SK-N-SH (cell line): ENCODE measurements at regions of chr11 and their contacts with region 1.

Region 1: DNA sequence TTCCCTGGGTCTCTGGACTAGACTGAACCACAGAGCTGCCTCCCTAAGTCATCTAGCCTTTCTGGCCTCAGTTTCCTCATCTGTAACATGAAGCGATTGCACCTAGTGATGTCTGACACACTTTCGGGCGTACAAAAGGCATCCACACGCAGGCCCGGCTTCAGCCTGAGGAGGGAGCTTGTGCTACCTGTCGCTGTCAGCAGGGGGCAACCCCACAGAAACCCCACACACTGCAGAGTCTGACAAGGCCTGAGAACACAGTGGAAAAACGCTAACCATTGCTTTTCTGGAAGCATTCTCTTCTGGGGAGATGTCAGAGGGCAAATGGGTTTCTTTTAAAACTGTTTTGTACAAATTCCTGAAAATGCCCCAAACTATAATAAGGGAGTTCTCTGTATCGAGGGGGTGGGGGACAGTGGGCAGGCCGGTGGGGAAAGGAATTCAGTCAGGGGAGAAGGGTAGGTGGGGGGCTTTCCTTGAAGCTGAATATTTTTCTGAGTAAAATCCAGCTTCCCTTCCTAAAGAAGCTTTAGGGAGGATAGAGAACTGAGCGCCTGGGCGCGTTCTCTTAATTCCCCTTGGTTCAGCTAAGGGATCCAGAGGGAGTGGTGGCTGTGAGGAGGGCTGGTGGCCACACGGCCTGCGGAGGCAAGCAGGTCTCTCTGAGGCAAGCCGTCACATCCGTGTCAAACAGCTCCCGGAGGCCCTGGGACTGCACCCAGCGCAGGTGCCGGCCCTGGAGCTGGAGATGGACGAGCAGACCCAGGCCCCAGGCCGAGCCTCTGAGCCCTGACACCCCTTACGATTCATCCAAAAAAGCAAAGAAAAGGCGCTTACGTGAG is 533 bp downstream of the ELF5 start:
- DNase-seq: peak; percentile 78
- H3K4me3 ChIP-seq: peak overlapping the region in 1 of 2 experiments; percentile 31; a peak in 1 of 4 replicates
- H3K27ac ChIP-seq: no peak overlapping the region
- H3K4me1 ChIP-seq: peaks cover 0 to 3% of the 10 kb centered on the region in 2 experiments; a peak in 2 of 4 replicates
- H3K27me3 ChIP-seq: no peaks in the 10 kb centered on the region; the same call in 1 of the 2 replicates
- CTCF ChIP-seq: peak; percentile 75
- EP300 ChIP-seq: no peak
- RAD21 ChIP-seq: peak; percentile 59

Region 2: DNA sequence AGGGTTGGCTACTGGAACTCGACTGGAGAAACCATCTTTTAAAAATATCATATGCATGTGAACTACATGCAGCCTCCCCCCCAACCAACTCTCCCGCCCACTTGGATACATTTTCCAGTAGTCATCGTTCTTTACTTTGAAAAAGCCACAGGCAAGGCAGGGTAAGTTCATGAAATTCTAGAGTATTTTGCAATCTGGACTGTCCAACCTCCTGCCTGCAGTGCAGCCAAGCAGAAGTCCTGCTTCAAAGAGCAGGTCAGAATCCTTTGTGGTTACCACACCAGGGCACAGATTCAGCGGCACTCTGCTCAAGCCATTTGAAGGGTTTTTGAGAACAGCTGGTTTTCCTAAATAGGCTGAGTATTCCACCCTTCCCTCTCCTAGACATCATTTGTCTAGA is 11.6 kb before region 1 on chr11:
- CTCF ChIA-PET with region 1: interaction called, 28 read pairs
- POLR2A ChIA-PET with region 1: no interaction called
- DNase-seq: no peak
- H3K4me3 ChIP-seq: no peak overlapping the region
- H3K27ac ChIP-seq: no peak overlapping the region
- H3K4me1 ChIP-seq: peaks cover 0 to 2% of the 10 kb centered on the region in 2 experiments; a peak in 1 of 4 replicates
- H3K27me3 ChIP-seq: no peaks in the 10 kb centered on the region
- CTCF ChIP-seq: no peak
- EP300 ChIP-seq: no peak
- RAD21 ChIP-seq: no peak

Region 3: DNA sequence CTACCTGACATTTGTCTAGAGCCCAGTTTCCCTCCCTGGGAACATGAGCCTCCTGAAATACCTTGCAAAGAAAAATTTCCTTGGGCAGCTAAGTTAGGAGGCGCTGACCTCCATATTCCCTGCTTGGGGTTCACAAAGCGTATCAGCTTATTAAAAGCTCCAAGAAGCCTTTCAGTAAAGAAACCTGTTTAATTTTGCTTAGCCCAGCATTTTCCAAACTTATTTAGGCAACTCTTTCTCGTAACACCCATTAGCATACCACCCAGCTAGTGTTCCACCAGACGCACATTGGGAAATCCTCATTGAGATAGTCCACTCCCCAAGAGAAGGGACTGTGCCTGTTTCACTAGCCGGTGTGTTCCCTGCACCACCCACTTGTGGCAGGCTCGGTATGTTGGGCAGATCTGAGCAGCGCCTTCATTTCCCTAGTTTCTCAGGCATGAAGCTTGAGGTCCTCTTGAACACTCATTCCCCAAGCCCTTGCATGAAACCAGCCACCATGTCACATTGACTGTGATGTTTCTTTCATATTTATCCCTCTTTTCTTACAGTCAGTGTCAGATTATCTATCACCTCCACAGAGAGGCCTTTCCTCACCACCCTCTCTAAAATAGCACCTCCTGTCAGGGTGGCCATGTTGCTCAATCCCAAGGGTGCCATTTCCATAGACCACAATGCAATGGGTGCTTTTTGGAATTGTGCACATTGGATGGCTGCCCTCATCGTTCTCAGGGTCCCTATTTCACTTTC is 13.0 kb after region 1 on chr11:
- CTCF ChIA-PET with region 1: interaction called, 13 read pairs
- POLR2A ChIA-PET with region 1: no interaction called
- DNase-seq: no peak
- H3K4me3 ChIP-seq: no peak overlapping the region
- H3K27ac ChIP-seq: no peak overlapping the region
- H3K4me1 ChIP-seq: peaks cover 0 to 9% of the 10 kb centered on the region in 2 experiments; a peak in 1 of 4 replicates
- H3K27me3 ChIP-seq: peaks cover 11% of the 10 kb centered on the region; the same call in 1 of the 2 replicates
- CTCF ChIP-seq: no peak
- EP300 ChIP-seq: no peak
- RAD21 ChIP-seq: no peak

Region 4: GRCh38 chr11:34558211-34558610 is 45.1 kb after region 1 on chr11:
- CTCF ChIA-PET with region 1: no interaction called
- POLR2A ChIA-PET with region 1: no interaction called
- DNase-seq: no peak
- H3K4me3 ChIP-seq: no peak overlapping the region
- H3K27ac ChIP-seq: no peak overlapping the region
- H3K4me1 ChIP-seq: no peaks in the 10 kb centered on the region
- H3K27me3 ChIP-seq: peaks cover 14% of the 10 kb centered on the region; the same call in 1 of the 2 replicates
- CTCF ChIP-seq: no peak
- EP300 ChIP-seq: no peak
- RAD21 ChIP-seq: no peak